ENCODE measurements at regions of chr17 and their contacts with region 1.

Region 1: DNA sequence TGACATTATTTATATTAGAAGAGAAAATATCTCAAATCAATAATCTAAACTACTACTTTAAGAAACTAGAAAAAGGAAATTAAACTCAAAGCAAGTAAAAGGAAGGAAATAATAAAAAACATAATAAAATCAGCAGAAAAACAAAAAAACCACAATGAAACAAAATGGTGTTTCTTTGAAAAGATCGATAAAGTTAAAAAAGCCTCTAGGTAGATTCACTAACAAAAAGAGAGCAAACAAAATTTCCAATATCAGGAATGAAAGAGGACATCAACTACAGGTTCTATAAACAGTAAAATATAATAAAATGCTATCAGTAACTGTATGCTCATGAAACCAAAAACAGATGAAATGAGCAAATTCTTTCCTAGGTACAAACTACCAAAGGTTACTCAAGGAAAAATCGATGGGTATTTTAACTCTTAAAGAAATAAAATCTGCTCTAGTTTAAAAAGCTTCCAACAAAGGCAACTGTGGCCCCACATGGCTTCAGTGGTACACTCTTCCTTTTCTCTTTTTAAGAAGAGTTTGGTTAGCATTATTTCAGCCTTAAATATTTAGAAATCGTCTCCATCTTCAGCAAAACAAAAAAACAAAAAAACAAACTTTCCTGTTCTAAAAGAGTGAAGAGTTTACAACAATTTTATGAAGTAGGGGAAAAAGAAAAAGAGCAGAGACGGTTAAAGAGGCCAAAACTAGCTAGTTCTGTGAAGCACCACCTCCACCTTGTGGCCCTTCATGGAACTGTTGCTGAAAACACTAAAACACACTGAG is 102.2 kb downstream of the TRIM37 start:
- DNase-seq: no peak
- H3K4me3 ChIP-seq: no peak overlapping the region
- CTCF ChIP-seq: peak; percentile 84

Region 2: DNA sequence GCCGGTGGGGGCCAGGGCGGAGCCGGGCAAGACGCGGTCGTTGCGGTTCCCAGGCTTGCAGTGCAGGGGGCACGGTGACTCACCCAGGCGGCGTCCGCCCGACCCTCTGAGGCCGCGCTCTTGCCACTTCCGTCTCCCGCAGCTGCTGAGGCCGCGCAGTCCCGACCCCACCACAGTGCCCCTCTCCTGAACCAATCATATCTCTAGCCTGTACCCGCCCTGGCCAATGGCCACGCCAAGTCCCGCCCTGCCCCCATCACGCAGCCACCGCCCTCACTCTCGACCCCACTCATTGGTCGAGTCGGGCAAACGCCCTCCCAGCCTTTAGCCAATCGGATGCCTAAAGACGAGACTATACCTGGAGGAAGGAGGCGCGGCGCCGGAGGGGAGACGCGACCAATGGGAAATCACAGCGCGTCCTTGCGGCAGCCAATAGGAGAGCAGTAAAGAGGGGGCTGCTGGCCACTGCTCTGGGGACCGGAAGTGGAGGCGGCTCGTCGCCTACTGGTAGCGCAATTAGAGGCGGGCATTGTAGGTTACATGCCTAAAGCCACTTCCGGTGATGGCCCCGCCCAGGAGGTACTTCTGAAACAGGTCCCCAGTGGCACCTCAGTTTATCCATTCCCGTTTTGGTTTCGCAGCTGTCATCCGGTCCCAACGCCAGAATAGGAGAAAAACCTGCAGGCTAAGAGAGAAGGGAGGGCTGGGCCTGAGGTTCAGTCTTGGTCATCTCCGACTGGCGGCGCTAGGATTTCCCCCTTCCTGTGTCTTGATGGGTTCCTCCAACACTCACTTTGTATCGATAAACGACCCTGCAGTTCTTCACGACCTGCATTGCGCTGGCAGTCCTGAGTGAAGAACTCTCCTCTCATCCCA is 486.6 kb before region 1 on chr17:
- CTCF ChIA-PET with region 1: interaction called, 68 read pairs
- POLR2A ChIA-PET with region 1: no interaction called
- DNase-seq: peak; percentile 99
- H3K4me3 ChIP-seq: peak overlapping the region; percentile 84
- CTCF ChIP-seq: no peak

Region 3: GRCh38 chr17:58587702-58588254 is 416.7 kb before region 1 on chr17:
- CTCF ChIA-PET with region 1: interaction called, 34 read pairs
- POLR2A ChIA-PET with region 1: no interaction called
- DNase-seq: no peak
- H3K4me3 ChIP-seq: no peak overlapping the region
- CTCF ChIP-seq: peak; percentile 96

Region 4: GRCh38 chr17:58703137-58703972 is 301.2 kb before region 1 on chr17:
- CTCF ChIA-PET with region 1: interaction called, 13 read pairs
- POLR2A ChIA-PET with region 1: no interaction called
- DNase-seq: peak; percentile 3
- H3K4me3 ChIP-seq: no peak overlapping the region
- CTCF ChIP-seq: no peak

Region 5: DNA sequence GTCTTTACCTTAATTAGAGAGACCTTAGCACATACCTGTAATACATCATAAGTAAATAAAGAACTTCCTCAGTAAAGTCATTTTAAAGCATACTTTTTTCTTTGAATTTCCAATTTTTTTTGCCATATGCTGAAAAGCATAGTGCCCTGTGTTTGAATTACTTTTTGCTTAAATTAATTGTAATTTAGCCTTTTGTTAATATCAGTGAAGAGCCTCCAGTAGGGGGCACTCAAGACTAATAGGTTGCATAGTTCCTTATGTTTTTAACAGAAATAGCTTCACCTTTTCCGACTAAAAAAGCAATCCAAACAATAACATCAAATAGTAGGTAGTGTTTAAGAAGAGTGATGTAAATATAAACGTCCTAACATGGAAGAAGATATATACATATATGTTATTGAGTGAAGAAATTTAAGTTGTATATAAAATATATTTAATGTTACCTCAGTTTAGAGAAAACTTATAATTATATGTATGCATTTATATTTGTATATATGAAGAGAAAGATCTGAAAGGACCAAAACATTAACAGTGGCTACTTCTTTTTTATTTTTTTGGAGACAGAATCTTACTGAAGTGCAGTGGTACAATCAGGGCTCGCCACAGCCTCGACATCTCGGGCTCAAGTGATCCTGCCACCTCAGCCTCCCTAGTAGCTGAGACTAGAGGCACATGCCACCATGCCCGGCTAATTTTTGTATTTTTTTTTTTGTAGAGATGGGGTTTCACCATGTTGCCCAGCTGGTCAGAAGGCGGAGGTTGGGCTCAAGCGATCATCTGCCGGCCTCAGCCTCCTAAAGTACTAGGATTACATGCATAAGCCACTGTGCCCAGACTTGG is 293.4 kb before region 1 on chr17:
- CTCF ChIA-PET with region 1: interaction called, 184 read pairs
- POLR2A ChIA-PET with region 1: no interaction called
- DNase-seq: no peak
- H3K4me3 ChIP-seq: no peak overlapping the region
- CTCF ChIP-seq: peak; percentile 41

Region 6: DNA sequence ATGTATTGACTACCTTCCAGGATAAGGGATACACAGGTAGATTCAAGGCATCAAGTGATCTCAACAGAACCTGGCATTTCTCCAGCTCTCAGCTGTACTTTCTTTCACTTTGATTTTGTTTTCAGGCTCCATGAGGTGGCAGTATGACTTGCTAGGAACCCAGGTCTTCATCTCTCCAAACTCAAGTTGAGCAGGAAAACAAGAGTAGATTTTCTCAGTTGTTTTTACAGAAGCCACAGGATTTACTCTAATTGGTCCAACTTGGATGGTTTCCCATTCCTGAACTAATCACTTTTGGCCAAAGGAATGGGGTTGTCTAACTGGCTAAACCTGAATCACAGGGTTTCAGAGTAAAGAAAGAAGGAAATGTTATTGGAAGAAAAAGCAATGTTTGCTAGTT is 44.5 kb before region 1 on chr17:
- CTCF ChIA-PET with region 1: interaction called, 10 read pairs
- POLR2A ChIA-PET with region 1: no interaction called
- DNase-seq: peak; percentile 37
- H3K4me3 ChIP-seq: no peak overlapping the region
- CTCF ChIP-seq: peak; percentile 31

Region 7: GRCh38 chr17:58991718-58992331 is 12.7 kb before region 1 on chr17:
- CTCF ChIA-PET with region 1: interaction called, 12 read pairs
- POLR2A ChIA-PET with region 1: no interaction called
- DNase-seq: peak; percentile 70
- H3K4me3 ChIP-seq: no peak overlapping the region
- CTCF ChIP-seq: no peak

Region 8: GRCh38 chr17:59266751-59267150 is 262.2 kb after region 1 on chr17:
- CTCF ChIA-PET with region 1: no interaction called
- POLR2A ChIA-PET with region 1: no interaction called
- DNase-seq: no peak
- H3K4me3 ChIP-seq: no peak overlapping the region
- CTCF ChIP-seq: no peak

Region 9: DNA sequence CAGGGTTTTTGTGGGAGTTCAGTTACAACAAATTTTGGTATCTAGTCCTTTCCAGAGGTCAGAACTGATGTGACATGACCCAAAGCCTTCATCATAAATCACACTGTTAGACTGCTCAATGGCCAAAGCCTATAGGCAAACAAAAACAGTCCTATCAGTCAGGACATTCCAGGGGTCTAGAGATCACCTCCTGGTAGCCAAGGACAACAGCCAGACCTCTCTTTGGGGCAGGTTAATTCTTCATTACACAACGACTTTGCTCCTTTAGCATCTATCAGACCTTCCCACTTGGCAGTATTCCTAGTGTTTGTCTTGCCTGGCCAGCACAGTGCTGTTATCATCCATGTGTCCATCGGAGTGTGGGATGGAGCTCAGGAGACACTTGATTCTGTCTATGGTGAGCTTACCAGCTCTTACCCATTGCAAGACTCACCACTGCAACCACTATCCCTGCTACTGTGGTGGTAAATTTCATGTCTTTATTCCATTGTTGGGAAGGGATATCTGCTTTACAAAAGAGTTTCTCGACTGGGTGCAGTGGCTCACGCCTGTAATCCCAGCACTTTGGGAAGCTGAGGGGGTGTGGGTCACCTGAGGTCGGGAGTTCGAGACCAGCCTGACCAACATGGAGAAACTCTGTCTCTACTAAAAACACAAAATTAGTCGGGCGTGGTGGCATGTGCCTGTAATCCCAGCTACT is 465.4 kb after region 1 on chr17:
- CTCF ChIA-PET with region 1: no interaction called
- POLR2A ChIA-PET with region 1: no interaction called
- DNase-seq: no peak
- H3K4me3 ChIP-seq: no peak overlapping the region
- CTCF ChIP-seq: no peak

Measured in AG04449 (cell line).